ENCODE measurements at regions of chr10 and their contacts with region 1.

Region 1: DNA sequence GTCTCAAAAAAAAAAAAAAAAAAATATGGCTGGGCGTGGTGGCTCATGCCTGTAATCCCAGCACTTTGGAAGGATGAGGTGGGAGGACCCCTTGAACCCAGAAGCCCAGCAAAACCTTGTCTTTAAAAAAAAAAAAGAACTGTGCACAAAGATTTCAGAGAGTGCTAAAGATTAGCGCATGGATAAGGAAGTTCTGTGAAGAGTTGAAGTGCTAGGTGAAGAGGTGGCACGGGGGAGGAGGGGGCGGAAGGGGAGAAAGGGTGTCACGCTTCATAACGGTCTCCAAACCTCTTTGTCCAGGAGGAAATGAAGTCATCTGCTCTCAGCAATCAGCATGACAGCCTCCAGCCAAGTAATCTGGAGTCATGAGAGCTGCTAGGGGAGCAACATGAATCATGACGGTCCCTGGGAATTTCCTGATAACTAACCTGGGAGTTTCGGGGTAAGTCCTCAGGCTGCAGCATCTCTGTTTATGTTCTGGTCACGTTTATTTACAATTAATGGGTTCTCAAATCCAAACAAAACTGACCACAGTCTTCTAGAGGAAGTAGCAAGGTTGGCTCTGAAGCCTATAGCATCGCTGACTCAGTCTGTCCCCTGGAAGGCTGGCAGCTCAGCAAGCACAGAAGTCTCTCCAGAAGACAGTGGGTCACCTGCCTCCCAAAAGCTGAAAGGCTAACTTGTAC is 1.9 kb upstream of the PLAU start:
- DNase-seq: peak; percentile 49 to 91 (median 65)
- ATAC-seq: peak; percentile 66
- H3K4me3 ChIP-seq: no peak overlapping the region
- H3K27ac ChIP-seq: peak overlapping the region; percentile 56; the same call in 1 of the 3 replicates
- H3K4me1 ChIP-seq: peaks cover 25 to 38% of the 10 kb centered on the region in 2 experiments
- H3K27me3 ChIP-seq: no peaks in the 10 kb centered on the region; a peak in 1 of 5 replicates
- CTCF ChIP-seq: no peak
- EP300 ChIP-seq: peak; percentile 91
- POLR2A ChIP-seq: no peak
- RAD21 ChIP-seq: no peak; a peak in 1 of 4 replicates

Region 2: DNA sequence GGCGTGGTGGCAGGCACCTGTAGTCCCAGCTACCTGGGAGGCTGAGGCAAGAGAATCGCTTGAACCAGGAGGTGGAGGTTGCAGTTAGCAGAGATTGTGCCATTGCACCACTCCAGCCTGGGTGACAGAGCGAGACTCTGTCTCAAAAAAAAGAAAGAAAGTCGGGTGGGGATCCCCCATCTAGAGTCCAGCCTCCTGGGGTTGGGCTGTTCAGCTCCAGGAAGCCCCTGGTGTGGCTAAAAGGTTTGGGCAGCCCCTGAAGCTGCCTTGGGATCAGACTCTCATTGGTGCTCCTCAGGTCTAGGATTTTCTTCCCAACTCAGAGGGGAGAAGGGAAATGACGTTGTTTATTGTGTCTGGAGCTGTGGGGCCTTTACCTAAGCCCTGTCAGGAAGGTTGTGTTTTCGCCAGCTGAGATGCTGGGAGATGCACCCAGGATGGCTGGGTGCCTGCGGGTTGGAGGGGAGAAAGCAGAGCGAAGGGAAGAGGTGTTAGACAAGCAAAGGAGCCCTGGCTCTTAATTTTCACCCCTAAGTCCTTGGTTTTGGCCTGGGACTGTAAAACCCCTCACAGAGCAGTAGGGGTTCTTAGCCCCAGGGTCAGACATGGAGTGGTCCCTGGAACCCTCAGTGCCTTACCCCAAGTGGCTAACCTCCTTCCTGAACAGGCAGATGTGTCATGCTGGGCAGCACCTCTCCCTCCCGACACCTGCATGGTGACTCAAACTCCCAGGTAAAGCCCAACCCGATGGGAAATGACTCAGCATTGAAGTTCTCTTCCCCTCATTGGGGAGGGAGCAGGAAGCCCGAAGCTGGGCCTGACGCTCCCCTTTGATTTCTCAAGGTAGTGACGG is 23.0 kb after region 1 on chr10:
- CTCF ChIA-PET with region 1: no interaction called
- POLR2A ChIA-PET with region 1: interaction called, 6 read pairs
- in situ Hi-C with region 1: no loop called
- intact Hi-C with region 1: loop called (anchors 1 kb)
- DNase-seq: peak; percentile 77 to 87 (median 84)
- ATAC-seq: peak; percentile 73
- H3K4me3 ChIP-seq: no peak overlapping the region
- H3K27ac ChIP-seq: peak overlapping the region; percentile 68
- H3K4me1 ChIP-seq: peaks cover 20 to 36% of the 10 kb centered on the region in 2 experiments
- H3K27me3 ChIP-seq: no peaks in the 10 kb centered on the region
- CTCF ChIP-seq: no peak
- EP300 ChIP-seq: peak; percentile 27; the same call in 1 of the 2 replicates
- POLR2A ChIP-seq: no peak
- RAD21 ChIP-seq: no peak